ENCODE measurements at regions of chr16 and their contacts with region 1.

Region 1: DNA sequence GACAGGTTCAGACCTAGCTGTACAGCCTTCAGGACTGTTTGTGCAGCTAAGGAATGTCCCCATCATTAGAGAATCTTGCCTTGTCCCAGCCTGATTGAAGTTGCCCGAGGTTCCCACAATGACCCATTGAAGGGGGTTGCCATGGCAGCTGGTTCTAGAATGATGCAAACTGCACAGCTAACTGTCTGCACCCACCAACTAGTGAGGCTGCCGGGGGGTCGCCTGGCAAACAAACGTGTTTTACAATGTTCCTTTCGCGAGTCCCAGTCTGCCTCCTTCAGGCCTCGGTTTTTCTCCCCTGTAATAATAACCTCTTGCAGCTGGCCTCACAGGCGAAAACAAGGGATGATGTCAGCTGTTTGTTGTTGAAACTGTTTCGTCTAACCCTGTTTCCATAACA is 5.5 kb downstream of the C16orf96 start:
- DNase-seq: no peak
- ATAC-seq: peak; percentile 41; the same call in 2 of the 3 replicates
- H3K4me3 ChIP-seq: no peak overlapping the region
- H3K27ac ChIP-seq: no peak overlapping the region
- H3K4me1 ChIP-seq: peaks cover 13% of the 10 kb centered on the region
- H3K27me3 ChIP-seq: peaks cover 1 to 26% of the 10 kb centered on the region in 2 experiments; a peak in 3 of 5 replicates
- CTCF ChIP-seq: no peak
- EP300 ChIP-seq: no peak
- POLR2A ChIP-seq: no peak
- RAD21 ChIP-seq: no peak

Region 2: DNA sequence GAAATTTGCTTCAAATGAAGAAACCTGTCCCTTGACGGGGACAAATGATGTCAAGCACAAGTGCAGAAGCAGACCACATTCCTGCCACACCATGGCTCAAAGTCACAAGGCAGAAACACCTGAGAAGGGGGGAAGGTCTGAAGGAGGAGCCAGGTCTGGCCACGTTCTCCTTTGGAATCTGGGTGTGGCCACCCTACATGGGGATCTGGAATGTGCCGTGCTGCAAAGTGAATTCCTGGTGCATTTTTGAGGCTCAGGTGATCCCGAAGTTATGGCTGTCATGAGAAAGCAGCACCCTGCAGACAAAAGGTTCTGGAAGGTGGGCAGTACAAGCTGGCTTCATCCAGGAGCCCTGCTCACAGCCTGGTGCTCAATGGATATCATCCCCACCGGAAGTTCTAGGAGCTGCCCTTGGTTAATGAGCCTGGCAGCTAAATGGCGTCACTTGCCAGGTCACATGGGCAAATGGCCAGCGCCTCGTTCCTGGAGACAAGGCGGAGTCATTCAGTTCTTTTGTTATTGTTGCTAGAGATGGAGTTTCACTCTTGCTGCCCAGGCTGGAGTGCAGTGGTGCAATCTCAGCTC is 425.3 kb before region 1 on chr16:
- CTCF ChIA-PET with region 1: no interaction called
- POLR2A ChIA-PET with region 1: no interaction called
- in situ Hi-C with region 1: no loop called
- intact Hi-C with region 1: no loop called
- DNase-seq: no peak
- ATAC-seq: peak; percentile 54
- H3K4me3 ChIP-seq: peak overlapping the region in 1 of 3 experiments; percentile 46; a peak in 3 of 6 replicates
- H3K27ac ChIP-seq: no peak overlapping the region
- H3K4me1 ChIP-seq: peaks cover 25% of the 10 kb centered on the region
- H3K27me3 ChIP-seq: no peaks in the 10 kb centered on the region
- CTCF ChIP-seq: no peak
- EP300 ChIP-seq: no peak
- POLR2A ChIP-seq: no peak
- RAD21 ChIP-seq: no peak

Region 3: GRCh38 chr16:4244254-4245076 is 317.1 kb before region 1 on chr16:
- CTCF ChIA-PET with region 1: no interaction called
- POLR2A ChIA-PET with region 1: no interaction called
- in situ Hi-C with region 1: no loop called
- intact Hi-C with region 1: no loop called
- DNase-seq: no peak
- ATAC-seq: no peak
- H3K4me3 ChIP-seq: no peak overlapping the region
- H3K27ac ChIP-seq: no peak overlapping the region
- H3K4me1 ChIP-seq: peaks cover 20% of the 10 kb centered on the region
- H3K27me3 ChIP-seq: peaks cover 2 to 39% of the 10 kb centered on the region in 2 experiments
- CTCF ChIP-seq: no peak
- EP300 ChIP-seq: no peak
- POLR2A ChIP-seq: no peak
- RAD21 ChIP-seq: no peak

Region 4: GRCh38 chr16:4494746-4495490 is 66.7 kb before region 1 on chr16:
- CTCF ChIA-PET with region 1: no interaction called
- POLR2A ChIA-PET with region 1: no interaction called
- in situ Hi-C with region 1: no loop called
- intact Hi-C with region 1: loop called (anchors 10 kb)
- DNase-seq: no peak
- ATAC-seq: no peak
- H3K4me3 ChIP-seq: no peak overlapping the region
- H3K27ac ChIP-seq: no peak overlapping the region
- H3K4me1 ChIP-seq: peaks cover 34% of the 10 kb centered on the region
- H3K27me3 ChIP-seq: no peaks in the 10 kb centered on the region
- CTCF ChIP-seq: no peak
- EP300 ChIP-seq: no peak
- POLR2A ChIP-seq: no peak
- RAD21 ChIP-seq: no peak

Measured in HepG2 (cell line).